HCT116 (cell line): ENCODE measurements at regions of chr10 and their contacts with region 1.

Region 1: GRCh38 chr10:103592186-103593021 is 98.9 kb downstream of the NEURL1 start:
- DNase-seq: peak; percentile 15
- ATAC-seq: peak; percentile 96
- H3K4me3 ChIP-seq: no peak overlapping the region
- H3K27ac ChIP-seq: no peak overlapping the region
- H3K4me1 ChIP-seq: no peaks in the 10 kb centered on the region
- H3K27me3 ChIP-seq: no peaks in the 10 kb centered on the region
- CTCF ChIP-seq: peak; percentile 60 to 96 (median 95)
- POLR2A ChIP-seq: no peak
- RAD21 ChIP-seq: peak; percentile 86

Region 2: GRCh38 chr10:103416436-103417147 is 175.8 kb before region 1 on chr10:
- CTCF ChIA-PET with region 1: interaction called, 5 read pairs
- POLR2A ChIA-PET with region 1: no interaction called
- RAD21 ChIA-PET with region 1: no interaction called
- intact Hi-C with region 1: loop called (anchors 1 kb)
- DNase-seq: peak; percentile 58
- ATAC-seq: peak; percentile 80
- H3K4me3 ChIP-seq: no peak overlapping the region
- H3K27ac ChIP-seq: no peak overlapping the region
- H3K4me1 ChIP-seq: no peaks in the 10 kb centered on the region
- H3K27me3 ChIP-seq: no peaks in the 10 kb centered on the region
- CTCF ChIP-seq: peak; percentile 57 to 93 (median 77)
- POLR2A ChIP-seq: no peak
- RAD21 ChIP-seq: peak; percentile 92

Region 3: GRCh38 chr10:103427866-103428265 is 164.5 kb before region 1 on chr10:
- CTCF ChIA-PET with region 1: no interaction called
- POLR2A ChIA-PET with region 1: no interaction called
- RAD21 ChIA-PET with region 1: no interaction called
- intact Hi-C with region 1: no loop called
- DNase-seq: no peak
- ATAC-seq: no peak
- H3K4me3 ChIP-seq: no peak overlapping the region
- H3K27ac ChIP-seq: no peak overlapping the region
- H3K4me1 ChIP-seq: no peaks in the 10 kb centered on the region
- H3K27me3 ChIP-seq: no peaks in the 10 kb centered on the region
- CTCF ChIP-seq: no peak
- POLR2A ChIP-seq: no peak
- RAD21 ChIP-seq: no peak

Region 4: DNA sequence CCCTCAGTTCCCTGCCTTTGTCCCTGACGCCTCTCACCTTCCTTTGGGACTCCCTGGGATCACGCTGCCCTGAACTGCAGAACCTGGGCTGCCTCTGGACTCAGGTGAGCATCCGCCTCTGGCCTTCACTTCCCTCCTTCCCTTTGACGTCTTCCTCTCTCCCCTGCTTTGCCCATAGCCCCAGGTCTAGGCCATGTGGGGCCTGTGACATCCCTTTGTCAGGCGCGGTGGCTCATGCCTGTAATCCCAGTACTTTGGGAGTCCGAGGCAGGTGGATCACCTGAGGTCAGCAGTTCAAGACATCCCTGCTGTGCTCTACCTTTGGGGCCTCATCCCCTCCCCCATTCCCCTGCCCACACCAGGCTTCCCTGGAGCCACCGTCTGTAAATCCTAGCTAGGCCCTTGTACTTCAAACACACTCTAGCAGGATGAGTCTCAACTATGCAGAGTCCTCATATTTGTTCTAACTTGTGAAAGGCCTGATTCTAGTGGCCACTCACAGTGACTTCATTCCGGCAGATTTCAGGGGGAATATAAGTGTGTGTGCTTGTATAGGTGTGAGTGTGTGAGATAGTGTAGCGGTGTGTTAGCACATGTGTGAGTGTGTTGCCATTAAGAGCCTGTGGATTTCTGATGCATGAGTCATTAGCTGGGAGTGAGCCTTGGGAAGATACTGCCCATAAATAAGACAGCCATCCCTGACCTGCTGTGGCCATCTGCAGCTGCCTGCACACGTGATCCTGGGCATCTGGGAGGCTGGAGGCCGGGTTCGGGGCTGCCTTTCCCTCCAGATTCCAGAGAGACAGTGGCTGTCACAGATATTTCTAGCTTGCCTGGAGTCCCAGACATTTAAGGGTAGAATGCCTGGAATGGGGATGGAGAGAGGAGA is 100.7 kb before region 1 on chr10:
- CTCF ChIA-PET with region 1: interaction called, 13 read pairs
- POLR2A ChIA-PET with region 1: no interaction called
- RAD21 ChIA-PET with region 1: interaction called in 1 of 2 experiments, 3 read pairs
- intact Hi-C with region 1: no loop called
- DNase-seq: peak; percentile 44
- ATAC-seq: peak; percentile 85
- H3K4me3 ChIP-seq: no peak overlapping the region
- H3K27ac ChIP-seq: no peak overlapping the region
- H3K4me1 ChIP-seq: peaks cover 15 to 28% of the 10 kb centered on the region in 2 experiments
- H3K27me3 ChIP-seq: no peaks in the 10 kb centered on the region
- CTCF ChIP-seq: no peak
- POLR2A ChIP-seq: no peak
- RAD21 ChIP-seq: no peak

Region 5: GRCh38 chr10:103507235-103508191 is 84.9 kb before region 1 on chr10:
- CTCF ChIA-PET with region 1: no interaction called
- POLR2A ChIA-PET with region 1: no interaction called
- RAD21 ChIA-PET with region 1: no interaction called
- intact Hi-C with region 1: loop called (anchors 2 kb)
- DNase-seq: no peak
- ATAC-seq: peak; percentile 16; the same call in 1 of the 2 replicates
- H3K4me3 ChIP-seq: no peak overlapping the region
- H3K27ac ChIP-seq: no peak overlapping the region
- H3K4me1 ChIP-seq: peaks cover 11 to 19% of the 10 kb centered on the region in 2 experiments
- H3K27me3 ChIP-seq: no peaks in the 10 kb centered on the region
- CTCF ChIP-seq: peak in 2 of 3 experiments; percentile 20 to 25; a peak in 1 of 6 replicates
- POLR2A ChIP-seq: no peak
- RAD21 ChIP-seq: no peak

Region 6: DNA sequence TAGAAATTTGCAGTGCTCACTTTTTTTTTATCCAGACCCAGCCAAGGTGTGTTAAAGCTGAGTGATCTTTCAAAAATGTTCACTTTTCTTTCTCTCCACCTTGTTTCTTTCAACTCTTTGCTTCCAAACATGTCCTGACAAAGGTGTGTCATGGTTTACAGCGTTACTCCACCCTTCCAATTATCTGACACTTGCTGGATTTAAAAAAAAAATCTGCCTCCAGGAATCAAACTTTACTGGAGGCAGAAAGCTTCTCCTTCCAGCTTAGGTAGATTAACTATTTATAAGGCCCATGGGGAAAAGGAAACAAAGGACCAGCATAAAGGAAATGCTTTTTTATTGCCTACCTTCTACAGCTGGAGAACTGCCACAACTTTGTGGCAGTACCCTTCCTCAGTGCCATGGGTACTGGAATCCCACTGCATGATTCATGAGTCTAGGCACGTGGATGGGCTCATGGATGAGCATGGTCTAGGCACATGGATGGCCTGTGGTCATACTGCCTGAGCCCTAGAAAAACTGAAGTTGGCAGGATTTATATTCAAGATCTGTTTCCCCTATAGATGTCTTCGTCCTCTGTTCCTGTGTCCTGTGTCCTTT is 493.5 kb after region 1 on chr10 and contains the start of gene COL17A1:
- CTCF ChIA-PET with region 1: no interaction called
- POLR2A ChIA-PET with region 1: no interaction called
- RAD21 ChIA-PET with region 1: no interaction called
- intact Hi-C with region 1: no loop called
- DNase-seq: no peak
- ATAC-seq: peak; percentile 30
- H3K4me3 ChIP-seq: no peak within 1 kb of the TSS
- H3K27ac ChIP-seq: no peak within 1 kb of the TSS
- H3K4me1 ChIP-seq: peaks cover 6 to 23% of the 10 kb centered on the region in 2 experiments; a peak in 3 of 4 replicates
- H3K27me3 ChIP-seq: no peaks in the 10 kb centered on the region
- CTCF ChIP-seq: no peak
- POLR2A ChIP-seq: no peak
- RAD21 ChIP-seq: no peak
- total RNA-seq, gene COL17A1: 3.5 TPM

Region 7: GRCh38 chr10:104630731-104631130 is 1038.3 kb after region 1 on chr10:
- CTCF ChIA-PET with region 1: no interaction called
- POLR2A ChIA-PET with region 1: no interaction called
- RAD21 ChIA-PET with region 1: no interaction called
- intact Hi-C with region 1: no loop called
- DNase-seq: no peak
- ATAC-seq: no peak; the same call in 1 of the 2 replicates
- H3K4me3 ChIP-seq: no peak overlapping the region
- H3K27ac ChIP-seq: no peak overlapping the region
- H3K4me1 ChIP-seq: no peaks in the 10 kb centered on the region
- H3K27me3 ChIP-seq: peaks cover 68% of the 10 kb centered on the region
- CTCF ChIP-seq: no peak
- POLR2A ChIP-seq: no peak
- RAD21 ChIP-seq: no peak